Esophagus muscularis mucosa (tissue), 4 donors: ENCODE measurements at regions of chr3 and their contacts with region 1.

Region 1: DNA sequence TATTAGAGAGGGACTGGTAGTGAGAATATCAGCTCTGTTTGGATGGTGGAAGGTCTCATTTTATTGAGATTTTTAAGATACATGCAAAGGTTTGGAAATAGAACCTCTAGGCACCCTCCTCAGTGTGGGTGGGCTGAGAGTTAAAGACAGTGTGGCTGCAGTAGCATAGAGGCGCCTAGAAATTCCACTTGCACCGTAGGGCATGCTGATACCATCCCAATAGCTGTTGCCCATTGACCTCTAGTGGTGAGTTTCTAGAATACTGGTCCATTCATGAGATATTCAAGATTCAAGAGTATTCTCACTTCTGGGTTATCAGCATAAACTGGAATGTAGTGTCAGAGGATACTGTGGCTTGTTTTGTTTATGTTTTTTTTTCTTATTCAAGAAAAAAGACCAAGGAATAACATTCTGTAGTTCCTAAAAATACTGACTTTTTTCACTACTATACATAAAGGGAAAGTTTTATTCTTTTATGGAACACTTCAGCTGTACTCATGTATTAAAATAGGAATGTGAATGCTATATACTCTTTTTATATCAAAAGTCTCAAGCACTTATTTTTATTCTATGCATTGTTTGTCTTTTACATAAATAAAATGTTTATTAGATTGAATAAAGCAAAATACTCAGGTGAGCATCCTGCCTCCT is 87.2 kb downstream of the TGFBR2 start:
- DNase-seq: no peak
- H3K4me3 ChIP-seq: no peak overlapping the region
- H3K27ac ChIP-seq: peak overlapping the region; percentile 62 to 73 (median 73)
- H3K4me1 ChIP-seq: peaks cover 59 to 82% (median 75%) of the 10 kb centered on the region in 4 donors
- H3K27me3 ChIP-seq: no peaks in the 10 kb centered on the region
- CTCF ChIP-seq: peak; percentile 76 to 88 (median 87)
- EP300 ChIP-seq: no peak
- POLR2A ChIP-seq: no peak

Region 2: DNA sequence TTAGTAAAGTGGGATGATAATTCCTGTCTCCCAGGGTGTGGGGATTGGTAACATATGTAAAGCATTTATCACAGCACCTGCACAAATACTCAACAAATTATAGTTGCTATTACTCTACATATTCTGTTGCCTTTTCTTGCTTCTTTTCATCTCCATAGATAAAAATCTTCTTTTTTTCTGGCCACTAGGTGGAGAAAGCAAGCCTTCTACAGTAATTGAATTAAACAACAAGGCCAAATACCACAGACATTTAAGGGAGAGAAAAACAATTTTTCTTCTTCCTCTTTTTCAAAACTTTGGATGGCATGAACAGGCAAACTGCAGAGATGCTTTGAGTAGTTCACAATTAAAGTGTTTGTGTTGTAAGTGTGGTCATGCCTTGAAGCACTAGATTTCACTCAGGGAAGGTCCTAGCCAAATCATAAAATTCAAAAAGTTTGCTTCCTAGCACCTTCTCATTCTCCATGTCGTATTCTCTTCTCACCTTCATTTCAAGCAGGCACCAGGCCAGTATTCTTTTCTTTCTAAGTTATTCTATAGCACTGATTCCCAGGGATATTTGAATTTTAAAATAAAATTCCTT is 580.6 kb before region 1 on chr3:
- intact Hi-C with region 1: loop called (anchors 5 kb)
- DNase-seq: no peak
- H3K4me3 ChIP-seq: no peak overlapping the region
- H3K27ac ChIP-seq: peak overlapping the region in 1 of 4 donors; percentile 15
- H3K4me1 ChIP-seq: peaks cover 10 to 24% (median 20%) of the 10 kb centered on the region in 4 donors
- H3K27me3 ChIP-seq: no peaks in the 10 kb centered on the region
- CTCF ChIP-seq: peak; percentile 68 to 70 (median 69)
- EP300 ChIP-seq: no peak
- POLR2A ChIP-seq: no peak

Region 3: DNA sequence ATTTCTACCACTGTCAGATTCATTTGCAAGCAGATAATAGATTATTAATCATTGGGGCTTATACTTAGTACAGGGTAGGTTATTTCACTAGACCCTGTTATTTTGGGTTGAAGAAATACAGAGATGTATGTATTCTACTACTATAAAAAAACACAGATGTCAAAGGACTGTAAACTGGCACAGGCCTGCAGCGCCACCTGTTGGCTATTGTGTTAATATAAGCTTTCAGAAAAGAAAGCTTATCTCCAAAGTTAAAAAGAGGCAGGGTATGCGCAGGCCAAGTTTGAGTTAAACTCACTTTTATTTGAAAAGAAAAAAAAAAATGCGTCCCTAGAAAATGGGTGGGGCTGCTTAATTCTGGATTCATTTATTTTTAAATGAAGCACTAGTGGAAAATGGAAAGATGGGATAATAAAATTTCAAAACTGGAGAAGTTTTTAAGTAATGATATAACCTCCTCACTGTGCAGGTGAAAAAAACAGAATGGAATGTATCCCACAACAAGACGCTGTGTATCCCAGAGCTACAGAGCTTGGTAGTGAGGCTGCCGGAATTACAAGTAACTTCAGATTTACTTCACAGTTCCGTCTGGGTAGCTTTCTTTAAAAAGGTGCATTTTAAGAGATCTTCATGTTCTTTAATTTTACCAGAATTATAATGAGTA is 494.4 kb before region 1 on chr3:
- intact Hi-C with region 1: loop called (anchors 5 kb)
- DNase-seq: no peak
- H3K4me3 ChIP-seq: no peak overlapping the region
- H3K27ac ChIP-seq: peak overlapping the region in 1 of 4 donors; percentile 14
- H3K4me1 ChIP-seq: peaks cover 15 to 26% (median 17%) of the 10 kb centered on the region in 4 donors
- H3K27me3 ChIP-seq: no peaks in the 10 kb centered on the region
- CTCF ChIP-seq: peak; percentile 74 to 83 (median 82)
- EP300 ChIP-seq: no peak
- POLR2A ChIP-seq: no peak

Region 4: DNA sequence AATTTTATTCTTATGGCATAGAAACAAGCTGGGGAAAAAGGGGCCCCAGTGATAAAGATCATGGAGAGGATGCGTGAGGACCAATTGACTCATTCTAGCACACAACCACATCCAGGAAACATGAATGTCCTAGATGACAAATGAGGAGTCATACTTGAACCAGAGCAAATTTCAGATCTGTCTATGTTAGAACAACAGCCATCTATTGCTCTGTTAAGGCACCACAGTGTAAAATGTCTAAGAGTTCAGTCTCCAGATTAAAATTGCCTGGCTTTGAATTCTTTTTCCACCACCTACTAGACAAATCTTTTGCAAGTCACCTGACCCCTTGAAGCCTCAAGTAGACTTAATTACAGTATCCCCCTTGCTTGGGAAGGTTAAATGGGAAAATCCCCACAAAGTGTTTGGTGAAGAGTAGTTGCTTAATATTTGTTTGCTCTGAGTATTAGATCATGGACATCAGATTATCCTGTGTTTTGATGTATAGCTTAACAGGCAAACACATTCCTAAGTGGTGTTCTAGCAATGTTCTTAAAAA is 345.8 kb before region 1 on chr3:
- intact Hi-C with region 1: loop called (anchors 10 kb)
- DNase-seq: no peak
- H3K4me3 ChIP-seq: no peak overlapping the region
- H3K27ac ChIP-seq: no peak overlapping the region
- H3K4me1 ChIP-seq: peaks cover 16 to 42% (median 28%) of the 10 kb centered on the region in 4 donors
- H3K27me3 ChIP-seq: no peaks in the 10 kb centered on the region
- CTCF ChIP-seq: no peak
- EP300 ChIP-seq: no peak
- POLR2A ChIP-seq: no peak

Region 5: GRCh38 chr3:30453360-30454039 is 240.1 kb before region 1 on chr3:
- intact Hi-C with region 1: loop called (anchors 10 kb)
- DNase-seq: no peak
- H3K4me3 ChIP-seq: no peak overlapping the region
- H3K27ac ChIP-seq: peak overlapping the region in 2 of 4 donors; percentile 22 to 79
- H3K4me1 ChIP-seq: peaks cover 22 to 51% (median 34%) of the 10 kb centered on the region in 4 donors
- H3K27me3 ChIP-seq: no peaks in the 10 kb centered on the region
- CTCF ChIP-seq: no peak
- EP300 ChIP-seq: no peak
- POLR2A ChIP-seq: no peak

Region 6: DNA sequence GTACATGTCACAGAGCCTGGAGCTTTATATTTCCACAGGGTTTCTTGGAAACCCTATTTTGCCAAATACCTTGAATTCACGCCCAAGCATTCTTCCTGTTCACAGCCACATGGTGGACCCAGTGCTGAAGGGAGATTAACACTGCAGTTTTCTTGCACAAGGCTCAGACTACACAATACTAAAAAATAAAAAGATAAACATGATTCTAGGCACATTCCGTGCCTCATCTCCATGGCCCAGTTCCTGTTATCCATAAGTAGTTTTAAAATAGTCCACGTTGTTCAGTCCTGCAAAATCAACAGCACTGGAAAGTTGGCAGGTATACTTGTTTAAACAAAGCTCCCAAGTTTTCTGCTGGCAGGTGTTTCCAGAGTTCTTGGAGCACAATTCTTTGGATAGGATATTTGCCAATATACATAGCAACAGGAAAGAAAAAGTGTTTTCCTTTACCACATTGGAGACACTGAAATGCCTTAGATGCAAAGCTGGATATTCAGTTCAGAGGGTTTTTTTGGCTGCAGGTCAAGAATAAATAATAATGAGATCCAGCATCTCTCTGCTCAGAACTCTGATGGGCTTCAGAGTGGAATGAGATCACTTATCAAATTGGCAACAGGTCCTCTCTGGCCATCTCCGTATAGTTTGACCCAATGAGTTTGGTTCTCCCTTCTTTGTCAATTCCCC is 175.3 kb before region 1 on chr3:
- intact Hi-C with region 1: loop called (anchors 5 kb)
- DNase-seq: no peak
- H3K4me3 ChIP-seq: no peak overlapping the region
- H3K27ac ChIP-seq: peak overlapping the region; percentile 79 to 86 (median 80)
- H3K4me1 ChIP-seq: peaks cover 15 to 70% (median 67%) of the 10 kb centered on the region in 4 donors
- H3K27me3 ChIP-seq: no peaks in the 10 kb centered on the region
- CTCF ChIP-seq: peak in 2 of 3 experiments; percentile 23 to 48
- EP300 ChIP-seq: peak; percentile 93
- POLR2A ChIP-seq: no peak

Region 7: GRCh38 chr3:30606301-30607031 is 87.1 kb before region 1 on chr3 and contains the start of gene TGFBR2:
- intact Hi-C with region 1: loop called (anchors 5 kb)
- DNase-seq: peak; percentile 99
- H3K4me3 ChIP-seq: peak within 1 kb of the TSS; percentile 79 to 96 (median 94)
- H3K27ac ChIP-seq: peak within 1 kb of the TSS; percentile 91 to 99 (median 99)
- H3K4me1 ChIP-seq: peaks cover 21 to 54% (median 42%) of the 10 kb centered on the region in 4 donors
- H3K27me3 ChIP-seq: no peaks in the 10 kb centered on the region
- CTCF ChIP-seq: peak; percentile 17 to 40 (median 30)
- EP300 ChIP-seq: no peak
- POLR2A ChIP-seq: peak; percentile 54
- total RNA-seq, gene TGFBR2: 202 to 292 (median 261) TPM

Region 8: GRCh38 chr3:30616438-30617027 is 77.1 kb before region 1 on chr3:
- intact Hi-C with region 1: no loop called
- DNase-seq: no peak
- H3K4me3 ChIP-seq: no peak overlapping the region
- H3K27ac ChIP-seq: peak overlapping the region; percentile 8 to 35 (median 20)
- H3K4me1 ChIP-seq: peaks cover 98 to 100% (median 99%) of the 10 kb centered on the region in 4 donors
- H3K27me3 ChIP-seq: no peaks in the 10 kb centered on the region
- CTCF ChIP-seq: no peak
- EP300 ChIP-seq: no peak
- POLR2A ChIP-seq: no peak

Region 9: DNA sequence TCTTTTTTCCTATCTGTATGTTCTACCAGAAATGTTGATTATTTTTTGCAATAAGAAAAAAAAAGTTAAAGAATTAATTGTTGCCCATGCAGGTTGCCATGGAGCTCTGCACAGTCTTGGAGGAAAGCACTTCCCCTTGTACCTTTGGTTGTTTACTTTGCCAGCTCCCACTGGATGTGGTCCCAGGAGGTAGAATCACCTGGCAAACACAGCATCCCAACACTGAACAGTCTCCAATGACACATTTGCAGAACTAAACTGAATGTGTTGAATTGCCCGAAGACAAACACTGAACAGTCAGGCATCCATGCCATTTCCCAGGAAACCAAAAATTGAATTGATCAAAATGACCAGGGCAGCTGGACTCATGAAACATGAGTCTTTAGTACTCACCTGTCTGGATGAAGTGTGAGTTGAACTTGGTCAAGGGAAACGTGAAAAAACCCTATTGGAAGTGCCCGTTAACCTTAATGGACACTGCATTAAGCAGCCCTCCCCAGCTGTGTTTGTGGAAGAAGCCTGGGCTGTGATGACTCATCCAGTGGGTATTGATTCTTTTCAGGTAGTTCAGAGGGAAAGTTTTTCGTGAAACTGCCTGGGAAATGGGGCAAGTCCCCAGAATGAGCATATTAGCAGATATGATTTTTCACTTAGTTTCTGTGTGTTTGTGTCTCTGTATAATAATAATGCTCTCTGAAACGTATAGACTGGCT is 554.4 kb after region 1 on chr3:
- intact Hi-C with region 1: no loop called
- DNase-seq: peak; percentile 57
- H3K4me3 ChIP-seq: no peak overlapping the region
- H3K27ac ChIP-seq: no peak overlapping the region
- H3K4me1 ChIP-seq: no peaks in the 10 kb centered on the region
- H3K27me3 ChIP-seq: no peaks in the 10 kb centered on the region
- CTCF ChIP-seq: no peak
- EP300 ChIP-seq: no peak
- POLR2A ChIP-seq: no peak